Mammary epithelial cell (primary cell): ENCODE measurements at regions of chr14 and their contacts with region 1.

Region 1: DNA sequence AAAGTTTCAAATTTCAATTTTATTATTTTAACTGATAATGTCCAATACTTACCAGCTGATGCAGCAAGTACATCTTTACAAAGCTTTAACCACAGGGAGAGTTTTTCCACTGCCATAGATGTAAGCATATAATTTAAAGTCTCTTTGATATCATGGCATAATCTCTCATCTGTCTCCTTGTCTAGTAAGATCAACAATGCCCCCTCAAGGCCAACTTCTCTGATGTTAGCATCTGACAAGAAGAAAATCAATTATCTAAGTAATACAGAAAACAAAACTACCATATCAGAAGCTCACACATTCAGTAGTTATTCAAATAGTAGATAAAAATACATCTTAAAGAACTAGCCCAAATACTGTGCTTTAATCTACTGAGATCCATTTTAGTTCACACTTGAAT is 94.2 kb downstream of the HEATR5A start:
- DNase-seq: peak; percentile 9
- H3K4me3 ChIP-seq: no peak overlapping the region
- H3K27ac ChIP-seq: no peak overlapping the region
- H3K4me1 ChIP-seq: no peaks in the 10 kb centered on the region
- H3K27me3 ChIP-seq: no peaks in the 10 kb centered on the region
- CTCF ChIP-seq: peak; percentile 7 to 34

Region 2: GRCh38 chr14:30928462-30928861 is 397.6 kb before region 1 on chr14:
- CTCF ChIA-PET with region 1: no interaction called
- dilution Hi-C with region 1: loop called (anchors 25 kb)
- in situ Hi-C with region 1: no loop called
- intact Hi-C with region 1: no loop called
- DNase-seq: no peak
- H3K4me3 ChIP-seq: no peak overlapping the region
- H3K27ac ChIP-seq: no peak overlapping the region
- H3K4me1 ChIP-seq: no peaks in the 10 kb centered on the region
- H3K27me3 ChIP-seq: no peaks in the 10 kb centered on the region
- CTCF ChIP-seq: no peak

Region 3: GRCh38 chr14:31166271-31166710 is 159.8 kb before region 1 on chr14:
- CTCF ChIA-PET with region 1: no interaction called
- dilution Hi-C with region 1: no loop called
- in situ Hi-C with region 1: no loop called
- intact Hi-C with region 1: loop called (anchors 5 kb)
- DNase-seq: peak; percentile 8
- H3K4me3 ChIP-seq: no peak overlapping the region
- H3K27ac ChIP-seq: peak overlapping the region; percentile 73
- H3K4me1 ChIP-seq: peaks cover 27% of the 10 kb centered on the region
- H3K27me3 ChIP-seq: no peaks in the 10 kb centered on the region
- CTCF ChIP-seq: no peak

Region 4: GRCh38 chr14:31411218-31411727 is 85.2 kb after region 1 on chr14:
- CTCF ChIA-PET with region 1: no interaction called
- dilution Hi-C with region 1: no loop called
- in situ Hi-C with region 1: no loop called
- intact Hi-C with region 1: no loop called
- DNase-seq: no peak
- H3K4me3 ChIP-seq: no peak overlapping the region
- H3K27ac ChIP-seq: no peak overlapping the region
- H3K4me1 ChIP-seq: peaks cover 8% of the 10 kb centered on the region
- H3K27me3 ChIP-seq: no peaks in the 10 kb centered on the region
- CTCF ChIP-seq: no peak